ENCODE measurements at regions of chr11 and their contacts with region 1.

Region 1: DNA sequence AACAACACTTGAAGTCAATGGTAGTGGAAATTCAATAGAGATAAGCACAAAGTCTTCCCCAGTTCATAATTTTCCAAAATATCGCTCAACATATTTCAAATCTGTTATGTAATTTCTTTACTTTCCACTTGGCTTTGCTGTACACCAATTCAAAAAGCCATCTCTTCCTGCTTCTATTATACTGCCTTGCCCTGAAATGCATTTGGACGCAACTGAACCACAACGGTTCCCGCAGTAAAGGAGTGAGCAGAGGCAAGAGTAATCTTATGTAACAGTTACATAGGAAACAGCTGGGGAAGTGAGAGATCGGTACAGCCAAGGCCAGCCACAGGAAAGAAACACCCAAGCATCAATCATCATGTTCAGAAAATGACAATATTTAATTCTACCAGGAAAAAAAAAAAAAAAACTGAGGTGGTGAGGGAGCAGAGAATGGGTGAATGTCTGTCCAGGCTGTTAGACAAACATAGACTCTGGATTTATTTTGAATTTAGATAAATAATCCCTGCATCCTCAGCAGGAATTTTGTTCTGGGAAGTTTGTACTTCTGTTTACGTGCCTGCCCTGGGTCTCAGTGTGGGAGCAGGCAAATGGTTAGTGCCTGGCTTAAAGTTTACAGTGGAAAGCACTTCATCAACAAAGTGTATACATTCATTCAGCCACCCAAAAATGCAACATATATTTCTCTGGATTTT is 392.2 kb downstream of the ETS1 start:
- DNase-seq: peak in 7 of 9 donors; percentile 63 to 85 (median 76)
- ATAC-seq: peak; percentile 86
- H3K4me3 ChIP-seq: no peak overlapping the region
- H3K4me3 Mint-ChIP-seq: peak overlapping the region in 9 of 10 donors; percentile 1 to 67 (median 49)
- H3K27ac ChIP-seq: peak overlapping the region; percentile 17
- H3K27ac Mint-ChIP-seq: peak overlapping the region in 8 of 9 donors; percentile 72 to 87 (median 81)
- H3K4me1 ChIP-seq: peaks cover 31 to 33% of the 10 kb centered on the region in 2 donors
- H3K4me1 Mint-ChIP-seq: peaks cover 31 to 45% (median 41%) of the 10 kb centered on the region in 7 donors
- H3K27me3 ChIP-seq: no peaks in the 10 kb centered on the region
- H3K27me3 Mint-ChIP-seq: peaks cover 0 to 2% (median 0%) of the 10 kb centered on the region in 5 donors

Region 2: GRCh38 chr11:128506999-128507611 is 311.9 kb after region 1 on chr11:
- CTCF ChIA-PET with region 1: no interaction called
- POLR2A ChIA-PET with region 1: interaction called, 3 read pairs
- intact Hi-C with region 1: loop called (anchors 5 to 10 kb)
- DNase-seq: peak in 1 of 9 donors; percentile 60
- ATAC-seq: no peak
- H3K4me3 ChIP-seq: peak overlapping the region; percentile 96
- H3K4me3 Mint-ChIP-seq: peak overlapping the region; percentile 85 to 100 (median 98)
- H3K27ac ChIP-seq: peak overlapping the region; percentile 97
- H3K27ac Mint-ChIP-seq: peak overlapping the region; percentile 87 to 99 (median 97)
- H3K4me1 ChIP-seq: peaks cover 89 to 91% of the 10 kb centered on the region in 2 donors
- H3K4me1 Mint-ChIP-seq: peaks cover 70 to 98% (median 92%) of the 10 kb centered on the region in 7 donors
- H3K27me3 ChIP-seq: no peaks in the 10 kb centered on the region
- H3K27me3 Mint-ChIP-seq: no peaks in the 10 kb centered on the region

Region 3: DNA sequence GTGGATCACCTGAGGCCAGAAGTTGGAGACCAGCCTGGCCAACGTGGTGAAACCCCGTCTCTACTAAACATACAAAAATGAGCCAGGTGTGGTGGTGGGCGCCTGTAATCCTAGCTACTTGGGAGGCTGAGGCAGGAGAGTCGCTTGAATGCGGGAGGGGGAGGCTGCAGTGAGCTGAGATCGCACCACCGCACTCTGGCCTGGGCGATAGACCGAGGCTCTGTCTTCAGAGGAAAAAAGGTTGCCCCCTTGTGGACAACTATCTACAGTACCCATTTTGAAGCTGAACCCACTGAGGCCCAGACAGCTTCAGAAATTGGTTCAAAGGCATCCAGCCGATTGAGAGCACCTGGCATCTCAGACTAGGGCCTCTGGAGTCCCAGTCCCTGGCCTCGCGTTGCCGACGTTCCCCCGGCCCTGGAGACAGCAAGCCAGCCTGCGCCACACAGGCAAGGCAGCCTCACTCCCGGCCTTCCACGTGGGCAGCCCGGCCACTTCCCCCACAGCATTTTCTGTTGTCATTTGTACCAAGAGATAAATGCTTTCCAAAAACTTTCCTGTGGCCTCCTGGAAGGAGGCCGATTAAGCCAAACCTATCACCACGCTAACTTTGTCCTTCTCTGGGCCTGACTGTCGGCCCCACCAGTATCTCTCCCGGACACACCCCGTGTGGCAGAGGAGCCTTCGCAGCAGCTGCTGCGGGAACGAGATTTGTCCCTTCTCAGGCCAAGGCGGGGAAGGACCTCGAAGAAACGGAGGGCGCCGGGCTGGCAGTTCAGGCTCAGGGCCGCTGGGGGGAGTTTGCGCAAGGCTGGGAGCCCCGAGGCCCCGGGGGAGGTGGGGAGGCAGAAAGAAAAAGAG is 581.5 kb after region 1 on chr11:
- CTCF ChIA-PET with region 1: no interaction called
- POLR2A ChIA-PET with region 1: no interaction called
- intact Hi-C with region 1: loop called in 1 of 2 experiments (anchors 1 kb)
- DNase-seq: peak in 7 of 9 donors; percentile 12 to 44 (median 38)
- ATAC-seq: peak; percentile 80
- H3K4me3 ChIP-seq: no peak overlapping the region
- H3K4me3 Mint-ChIP-seq: no peak overlapping the region
- H3K27ac ChIP-seq: no peak overlapping the region
- H3K27ac Mint-ChIP-seq: peak overlapping the region in 6 of 9 donors; percentile 34 to 65 (median 58)
- H3K4me1 ChIP-seq: peaks cover 21 to 34% of the 10 kb centered on the region in 2 donors
- H3K4me1 Mint-ChIP-seq: peaks cover 46 to 89% (median 66%) of the 10 kb centered on the region in 7 donors
- H3K27me3 ChIP-seq: no peaks in the 10 kb centered on the region
- H3K27me3 Mint-ChIP-seq: no peaks in the 10 kb centered on the region